ENCODE measurements at regions of chr7 and their contacts with region 1.

Region 1: GRCh38 chr7:119578116-119578515 is 694.9 kb upstream of the KCND2 start:
- DNase-seq: no peak
- H3K4me3 ChIP-seq: no peak overlapping the region
- H3K27ac ChIP-seq: no peak overlapping the region
- H3K4me1 ChIP-seq: no peaks in the 10 kb centered on the region
- H3K27me3 ChIP-seq: no peaks in the 10 kb centered on the region
- CTCF ChIP-seq: no peak
- POLR2A ChIP-seq: no peak

Region 2: DNA sequence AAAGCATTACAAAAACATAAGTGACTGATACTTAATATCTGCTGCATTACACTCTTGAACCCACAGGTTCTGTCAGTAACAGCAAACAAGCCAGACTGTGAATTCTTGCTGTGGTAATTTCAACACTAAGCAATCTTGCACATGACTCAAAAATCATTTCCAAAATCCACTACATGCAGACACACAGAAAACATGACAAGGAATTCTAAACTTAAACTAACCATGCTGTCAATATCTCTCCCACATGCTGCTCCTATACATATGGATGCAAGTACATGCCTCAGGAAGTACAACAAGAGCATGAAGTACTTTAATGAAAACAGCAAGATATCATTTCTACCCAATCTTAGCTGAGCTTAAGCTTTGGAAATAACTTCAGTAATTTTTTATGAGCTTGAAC is 195.4 kb before region 1 on chr7:
- CTCF ChIA-PET with region 1: no interaction called
- POLR2A ChIA-PET with region 1: no interaction called
- dilution Hi-C with region 1: no loop called
- intact Hi-C with region 1: loop called (anchors 10 kb)
- DNase-seq: no peak
- H3K4me3 ChIP-seq: no peak overlapping the region
- H3K27ac ChIP-seq: no peak overlapping the region
- H3K4me1 ChIP-seq: no peaks in the 10 kb centered on the region
- H3K27me3 ChIP-seq: no peaks in the 10 kb centered on the region
- CTCF ChIP-seq: no peak
- POLR2A ChIP-seq: no peak

Measured in endothelial cell of umbilical vein (primary cell).